Activated CD4-positive, alpha-beta memory T cell treated with anti-CD3 and anti-CD28 coated beads, Interleukin-2, amount 10 ng/mL, durations not matched to agents 7 days and 5 days (primary cell): ENCODE measurements at regions of chr12 and their contacts with region 1.

Region 1: GRCh38 chr12:55738123-55739024 is 4.5 kb upstream of the GDF11 start:
- DNase-seq: peak; percentile 87
- H3K4me3 Mint-ChIP-seq: peak overlapping the region; percentile 88
- H3K27ac Mint-ChIP-seq: peak overlapping the region; percentile 84
- H3K4me1 Mint-ChIP-seq: peaks cover 33% of the 10 kb centered on the region
- H3K27me3 Mint-ChIP-seq: peaks cover 11% of the 10 kb centered on the region

Region 2: GRCh38 chr12:55715833-55716581 is 22.4 kb before region 1 on chr12 and contains the start of gene BLOC1S1:
- CTCF ChIA-PET with region 1: interaction called, 33 read pairs
- POLR2A ChIA-PET with region 1: interaction called, 15 read pairs
- DNase-seq: peak; percentile 95
- H3K4me3 Mint-ChIP-seq: peak within 1 kb of the TSS; percentile 94
- H3K27ac Mint-ChIP-seq: peak within 1 kb of the TSS; percentile 93
- H3K4me1 Mint-ChIP-seq: peaks cover 54% of the 10 kb centered on the region
- H3K27me3 Mint-ChIP-seq: peaks cover 10% of the 10 kb centered on the region
- total RNA-seq, gene BLOC1S1: 156 to 162 TPM

Region 3: GRCh38 chr12:55797068-55797467 is 58.7 kb after region 1 on chr12:
- CTCF ChIA-PET with region 1: interaction called, 32 read pairs
- POLR2A ChIA-PET with region 1: interaction called, 8 read pairs
- DNase-seq: no peak
- H3K4me3 Mint-ChIP-seq: no peak overlapping the region
- H3K27ac Mint-ChIP-seq: no peak overlapping the region
- H3K4me1 Mint-ChIP-seq: peaks cover 17% of the 10 kb centered on the region
- H3K27me3 Mint-ChIP-seq: no peaks in the 10 kb centered on the region

Region 4: DNA sequence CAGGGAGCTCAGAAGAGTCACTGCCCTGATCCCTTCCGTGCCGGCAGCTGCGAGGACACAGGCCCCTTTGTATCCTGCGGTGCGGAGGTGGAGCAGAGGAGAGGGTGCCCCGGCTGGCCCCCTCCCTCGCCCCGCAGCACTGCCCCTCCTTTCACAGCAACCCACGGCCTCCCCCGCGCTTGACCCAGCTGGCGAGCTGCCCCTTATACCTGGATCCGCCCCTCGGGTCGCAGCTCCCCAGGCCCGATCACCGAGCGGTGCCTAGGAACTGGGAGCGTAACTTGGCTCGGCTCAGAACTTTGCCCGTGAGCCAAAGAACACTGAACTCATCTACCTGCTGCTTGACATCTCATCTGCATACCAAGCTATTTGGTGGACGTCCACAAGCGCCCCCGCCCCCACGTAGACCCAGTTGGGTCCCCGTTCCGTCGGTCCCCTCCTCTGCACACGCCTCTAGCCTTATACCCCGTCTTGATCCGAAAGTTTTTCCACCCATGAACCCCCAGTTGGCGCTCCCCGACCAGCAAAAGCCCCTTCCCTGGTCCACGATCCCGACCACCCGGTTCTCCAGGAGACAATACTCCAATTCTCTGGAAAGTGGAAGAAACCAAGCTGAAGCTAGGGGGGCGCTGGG is 91.7 kb after region 1 on chr12:
- CTCF ChIA-PET with region 1: interaction called, 21 read pairs
- POLR2A ChIA-PET with region 1: interaction called, 4 read pairs
- DNase-seq: peak; percentile 50
- H3K4me3 Mint-ChIP-seq: peak overlapping the region; percentile 99
- H3K27ac Mint-ChIP-seq: peak overlapping the region; percentile 94
- H3K4me1 Mint-ChIP-seq: peaks cover 54% of the 10 kb centered on the region
- H3K27me3 Mint-ChIP-seq: no peaks in the 10 kb centered on the region

Region 5: GRCh38 chr12:55931780-55932550 is 193.6 kb after region 1 on chr12:
- CTCF ChIA-PET with region 1: interaction called, 28 read pairs
- POLR2A ChIA-PET with region 1: interaction called, 23 read pairs
- DNase-seq: peak; percentile 45
- H3K4me3 Mint-ChIP-seq: peak overlapping the region; percentile 91
- H3K27ac Mint-ChIP-seq: peak overlapping the region; percentile 96
- H3K4me1 Mint-ChIP-seq: peaks cover 64% of the 10 kb centered on the region
- H3K27me3 Mint-ChIP-seq: no peaks in the 10 kb centered on the region

Region 6: GRCh38 chr12:55996715-55997534 is 258.6 kb after region 1 on chr12 and contains the start of gene SUOX:
- CTCF ChIA-PET with region 1: interaction called, 15 read pairs
- POLR2A ChIA-PET with region 1: interaction called, 6 read pairs
- DNase-seq: peak; percentile 46
- H3K4me3 Mint-ChIP-seq: peak within 1 kb of the TSS; percentile 66
- H3K27ac Mint-ChIP-seq: no peak within 1 kb of the TSS
- H3K4me1 Mint-ChIP-seq: peaks cover 38% of the 10 kb centered on the region
- H3K27me3 Mint-ChIP-seq: no peaks in the 10 kb centered on the region
- total RNA-seq, gene SUOX: 4.2 to 5.3 TPM

Region 7: GRCh38 chr12:56468216-56469006 is 730.0 kb after region 1 on chr12 and contains the start of gene SPRYD4:
- CTCF ChIA-PET with region 1: no interaction called
- POLR2A ChIA-PET with region 1: no interaction called
- DNase-seq: peak; percentile 96
- H3K4me3 Mint-ChIP-seq: peak within 1 kb of the TSS; percentile 94
- H3K27ac Mint-ChIP-seq: peak within 1 kb of the TSS; percentile 94
- H3K4me1 Mint-ChIP-seq: peaks cover 29% of the 10 kb centered on the region
- H3K27me3 Mint-ChIP-seq: no peaks in the 10 kb centered on the region
- total RNA-seq, gene SPRYD4: 2.9 to 3.1 TPM